Astrocyte of the cerebellum (primary cell): ENCODE measurements at regions of chr2 and their contacts with region 1.

Region 1: DNA sequence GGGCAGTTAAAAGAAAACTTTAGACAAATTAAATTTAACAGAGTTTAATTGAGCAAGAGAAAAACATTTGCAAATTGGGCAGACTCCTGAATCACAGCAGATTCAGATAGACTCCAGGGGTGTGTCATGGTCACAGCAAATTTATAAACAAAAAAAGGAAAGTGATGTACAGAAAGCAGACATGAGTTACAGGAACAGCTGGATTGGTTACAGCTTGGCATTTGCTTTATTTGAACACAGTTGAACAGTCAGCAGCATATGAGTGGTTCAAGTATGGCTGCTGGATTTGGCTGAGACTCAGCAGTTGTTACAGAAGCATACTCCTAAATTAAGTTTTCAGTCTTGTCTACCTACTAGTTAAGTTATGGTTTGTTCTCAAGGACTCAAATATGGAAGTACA is 82.3 kb upstream of the NYAP2 start:
- DNase-seq: no peak
- H3K4me3 ChIP-seq: no peak overlapping the region
- CTCF ChIP-seq: no peak

Region 2: DNA sequence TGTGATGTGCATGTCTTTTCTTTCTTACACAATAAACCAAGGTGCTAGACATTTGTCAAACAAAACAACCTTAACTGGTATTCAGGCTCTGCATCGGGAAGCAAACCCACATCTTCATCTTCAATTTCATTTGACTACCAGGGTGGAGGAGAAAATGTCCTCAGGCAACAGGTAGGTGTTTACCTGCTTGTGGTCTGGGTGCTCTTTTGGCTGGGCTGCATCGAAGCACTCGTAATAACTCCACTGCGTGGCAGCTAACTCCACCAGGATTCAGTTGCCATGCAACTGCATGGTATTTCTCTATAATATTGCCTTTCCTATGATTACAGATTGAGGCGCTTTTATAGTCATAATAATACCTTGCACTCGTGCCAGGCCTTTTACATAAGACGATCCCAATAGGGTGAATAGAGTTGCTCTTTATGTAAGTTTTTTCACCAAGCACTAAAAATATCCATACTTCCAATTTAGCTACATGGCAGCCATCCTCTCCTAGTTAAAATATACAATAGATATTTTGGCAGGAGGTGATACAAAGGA is 62.6 kb after region 1 on chr2:
- in situ Hi-C with region 1: loop called (anchors 5 kb)
- DNase-seq: no peak
- H3K4me3 ChIP-seq: no peak overlapping the region
- CTCF ChIP-seq: no peak